Activated naive CD4-positive, alpha-beta T cell treated with anti-CD3 and anti-CD28 coated beads for 36 hours (primary cell): ENCODE measurements at regions of chr20 and their contacts with region 1.

Region 1: DNA sequence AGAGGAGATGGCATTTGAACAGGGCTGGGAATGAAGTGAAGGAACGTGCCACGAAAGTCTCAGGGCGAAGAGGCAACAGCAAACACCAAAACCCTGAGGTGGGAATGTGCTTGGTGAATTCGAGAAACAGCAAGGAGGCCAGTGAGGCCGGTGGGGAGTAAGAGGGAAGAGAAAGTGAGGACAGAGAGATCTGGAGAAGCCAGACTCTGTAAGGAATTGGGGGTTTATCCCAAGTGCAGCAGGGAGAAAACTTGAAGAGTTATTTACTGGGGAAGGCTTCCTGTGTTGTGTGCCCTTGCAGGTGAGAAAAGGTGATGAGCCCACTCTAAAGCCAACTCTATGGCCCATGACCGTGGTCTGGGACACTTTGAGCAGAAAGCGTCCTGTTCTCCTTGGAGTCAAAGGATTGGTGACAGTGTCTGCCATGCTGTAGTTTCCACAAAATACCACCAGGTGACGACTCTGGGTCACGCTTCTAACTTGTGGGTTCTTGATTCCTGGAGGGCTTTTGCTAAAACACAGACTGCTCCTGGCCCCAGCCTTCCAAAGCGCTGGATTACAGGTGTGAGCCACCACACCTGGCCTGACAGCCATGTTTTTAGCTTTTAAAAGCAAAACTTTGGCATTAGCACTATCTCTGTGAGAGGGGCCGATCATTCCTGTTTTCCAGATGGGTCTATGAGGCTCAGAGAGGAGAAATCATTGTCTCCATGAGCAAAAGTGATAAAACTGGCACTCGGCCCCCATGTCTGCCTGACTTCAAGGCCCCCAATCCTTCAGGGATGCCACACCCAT is 18.0 kb upstream of the CSNK2A1 start:
- DNase-seq: peak; percentile 77
- H3K4me3 Mint-ChIP-seq: no peak overlapping the region
- H3K27ac Mint-ChIP-seq: no peak overlapping the region
- H3K4me1 Mint-ChIP-seq: no peaks in the 10 kb centered on the region
- H3K27me3 Mint-ChIP-seq: peaks cover 11% of the 10 kb centered on the region

Region 2: DNA sequence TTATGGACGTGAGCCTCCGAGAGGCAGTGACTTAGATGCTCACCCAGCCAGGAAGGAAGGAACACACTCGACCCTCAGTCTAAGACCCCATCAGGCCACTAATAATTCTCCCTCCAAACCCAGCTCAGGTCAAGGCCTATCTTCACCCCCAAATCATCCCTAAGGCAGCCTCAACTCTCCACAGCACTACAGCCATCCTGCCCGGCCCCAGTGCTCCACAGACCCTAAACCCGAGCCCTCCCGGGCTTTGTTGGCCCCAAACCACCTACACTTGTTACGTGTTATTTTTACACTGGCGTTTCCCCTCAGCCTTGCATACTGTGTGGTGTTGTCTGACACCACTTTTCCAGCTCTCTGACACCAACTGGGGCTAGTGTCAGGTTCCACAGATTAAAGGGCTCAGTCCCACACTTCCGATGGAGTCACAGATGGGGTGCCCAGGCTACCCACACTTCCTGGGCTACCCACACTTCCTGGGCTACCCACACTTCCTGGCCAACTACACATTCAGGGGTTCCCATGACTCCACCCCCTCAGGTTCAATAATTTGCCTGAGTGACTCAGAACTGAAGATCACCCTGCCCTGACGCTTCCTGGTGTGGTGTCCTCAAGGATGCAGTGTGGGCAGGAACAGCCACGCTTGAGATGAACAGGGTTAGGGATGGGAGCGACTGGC is 128.2 kb before region 1 on chr20:
- CTCF ChIA-PET with region 1: no interaction called
- intact Hi-C with region 1: no loop called
- DNase-seq: peak; percentile 80
- H3K4me3 Mint-ChIP-seq: peak overlapping the region; percentile 55
- H3K27ac Mint-ChIP-seq: peak overlapping the region; percentile 97
- H3K4me1 Mint-ChIP-seq: peaks cover 59% of the 10 kb centered on the region
- H3K27me3 Mint-ChIP-seq: no peaks in the 10 kb centered on the region

Region 3: DNA sequence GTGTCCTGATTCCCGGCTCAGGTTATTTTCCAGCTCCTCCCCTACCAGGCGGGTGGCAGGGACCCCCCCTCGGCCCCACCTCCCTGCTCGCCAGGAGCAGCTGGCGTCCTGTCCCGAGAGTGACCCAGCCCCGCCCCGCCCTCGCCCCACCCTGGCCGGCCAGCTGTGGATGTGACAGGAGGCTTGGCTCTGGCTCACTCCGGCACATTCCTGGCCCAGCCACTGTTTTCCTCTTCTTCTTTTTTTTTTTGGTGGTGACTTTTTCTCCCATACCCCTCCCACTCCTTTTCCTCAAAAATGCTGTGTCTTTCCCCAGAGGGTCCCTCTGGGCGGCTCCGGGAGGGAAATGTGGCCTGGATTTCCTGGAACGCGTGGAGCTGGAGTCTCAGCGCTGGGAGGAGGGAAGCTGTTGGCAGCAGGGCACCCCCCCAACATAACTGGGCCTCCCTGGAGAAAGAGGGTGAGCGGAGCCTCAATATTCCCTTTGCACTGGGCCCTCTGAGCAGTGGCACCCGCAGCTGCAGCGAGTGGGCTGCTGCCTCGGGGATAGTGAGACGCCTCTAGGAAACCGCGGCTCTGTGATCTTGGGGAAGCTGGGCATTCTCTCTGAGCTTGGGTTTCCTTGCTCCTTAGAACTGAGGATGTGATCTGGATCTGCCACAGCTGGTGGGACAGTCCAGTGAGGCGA is 10.3 kb after region 1 on chr20:
- CTCF ChIA-PET with region 1: interaction called, 13 read pairs
- intact Hi-C with region 1: no loop called
- DNase-seq: no peak
- H3K4me3 Mint-ChIP-seq: no peak overlapping the region
- H3K27ac Mint-ChIP-seq: no peak overlapping the region
- H3K4me1 Mint-ChIP-seq: peaks cover 3% of the 10 kb centered on the region
- H3K27me3 Mint-ChIP-seq: peaks cover 38% of the 10 kb centered on the region

Region 4: DNA sequence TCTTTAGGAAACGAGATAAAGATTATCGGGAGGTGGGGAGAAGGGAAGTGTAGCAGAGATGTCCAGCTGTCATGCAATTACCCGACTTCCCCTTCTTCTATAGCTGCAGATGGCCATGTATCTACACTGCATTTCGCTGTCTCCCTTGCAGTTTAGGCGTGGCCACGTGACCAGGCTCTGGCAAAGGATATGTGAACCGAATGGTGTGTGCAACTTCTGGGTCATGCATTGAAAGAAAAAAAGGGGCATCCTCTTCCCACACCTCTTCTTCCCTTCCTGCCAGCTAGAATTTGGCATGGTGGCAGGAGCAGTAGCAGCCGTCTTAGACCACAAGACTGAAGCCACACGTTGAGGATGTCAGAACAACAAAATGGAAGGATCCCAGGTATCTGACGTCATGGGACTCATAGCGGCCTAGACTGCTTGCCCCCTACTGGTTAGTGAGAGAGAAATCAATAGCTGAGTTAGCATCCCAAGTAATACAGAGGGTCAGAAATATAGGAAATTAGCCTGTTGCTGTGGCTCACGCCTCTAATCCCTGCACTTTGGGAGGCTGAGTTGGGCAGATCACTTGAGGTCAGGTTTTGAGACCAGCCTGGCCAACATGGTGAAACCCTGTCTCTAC is 15.6 kb after region 1 on chr20:
- CTCF ChIA-PET with region 1: interaction called, 13 read pairs
- intact Hi-C with region 1: no loop called
- DNase-seq: no peak
- H3K4me3 Mint-ChIP-seq: no peak overlapping the region
- H3K27ac Mint-ChIP-seq: no peak overlapping the region
- H3K4me1 Mint-ChIP-seq: no peaks in the 10 kb centered on the region
- H3K27me3 Mint-ChIP-seq: peaks cover 20% of the 10 kb centered on the region

Region 5: DNA sequence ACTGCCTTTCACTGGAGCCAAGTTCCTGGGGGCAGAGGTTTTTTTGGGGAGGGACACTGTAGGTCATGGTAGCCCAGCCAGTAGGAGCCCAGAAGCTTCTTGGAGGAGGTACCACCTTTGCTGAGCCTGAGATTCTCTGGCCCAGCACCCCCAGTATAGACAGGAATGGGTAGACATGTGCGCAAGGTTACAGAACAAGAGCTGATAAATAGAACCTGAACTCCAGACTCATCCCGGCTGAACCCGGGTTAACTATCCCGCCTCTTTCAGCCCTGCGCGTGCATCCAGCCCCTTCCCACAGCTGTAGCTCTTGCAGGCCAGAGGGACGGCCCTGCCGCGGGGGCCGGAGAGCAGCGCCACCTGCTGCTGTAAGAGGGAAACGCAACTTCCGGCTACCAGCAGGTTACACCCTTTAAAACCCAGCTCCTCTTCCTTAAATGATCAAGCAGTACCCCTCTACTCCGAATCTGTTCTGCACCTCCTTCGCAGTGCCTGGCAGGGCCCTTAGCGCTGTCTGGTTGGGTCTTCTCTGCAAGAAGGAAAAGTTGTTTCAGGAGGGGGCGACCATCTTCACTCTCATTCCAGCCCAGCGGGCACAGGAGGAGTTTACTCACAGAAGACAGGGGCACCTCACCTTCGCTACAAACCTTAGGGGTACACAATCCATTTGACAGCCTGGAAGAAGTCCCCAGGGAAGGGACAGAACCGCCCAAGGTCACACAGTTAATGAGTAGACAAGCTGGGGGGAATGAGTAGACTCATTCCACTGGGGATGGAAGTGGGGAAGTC is 83.9 kb after region 1 on chr20:
- CTCF ChIA-PET with region 1: interaction called, 16 read pairs
- intact Hi-C with region 1: loop called (anchors 1 kb)
- DNase-seq: peak; percentile 76
- H3K4me3 Mint-ChIP-seq: no peak overlapping the region
- H3K27ac Mint-ChIP-seq: no peak overlapping the region
- H3K4me1 Mint-ChIP-seq: peaks cover 9% of the 10 kb centered on the region
- H3K27me3 Mint-ChIP-seq: peaks cover 21% of the 10 kb centered on the region

Region 6: DNA sequence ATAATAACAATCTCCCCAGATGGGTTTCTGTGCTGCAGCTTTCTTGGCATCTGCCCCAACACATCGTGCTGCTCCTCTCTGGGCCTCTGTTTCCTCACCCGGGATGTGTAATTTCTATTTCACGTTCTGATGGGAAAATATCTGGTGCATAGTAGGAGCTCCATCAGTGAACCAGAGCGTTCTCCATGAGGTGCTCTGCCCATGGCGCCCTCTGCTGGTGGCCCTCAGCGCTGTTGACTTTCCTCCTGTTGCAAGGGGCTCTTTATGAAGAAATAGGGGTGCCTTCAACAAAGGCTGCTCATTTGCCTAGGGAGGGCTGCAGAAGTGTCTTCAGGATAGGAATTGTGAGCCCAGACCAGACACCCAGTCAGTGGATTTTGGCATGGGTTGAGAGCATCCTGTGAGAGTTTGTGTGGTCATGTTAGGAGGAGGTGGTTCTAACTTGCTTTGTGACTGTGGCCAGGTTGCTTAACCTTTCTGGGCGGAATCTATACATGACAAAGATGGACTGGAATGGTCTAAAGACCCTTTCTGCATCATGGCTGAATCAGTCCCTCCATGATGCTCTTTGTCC is 105.8 kb after region 1 on chr20:
- CTCF ChIA-PET with region 1: interaction called, 3 read pairs
- intact Hi-C with region 1: loop called (anchors 1 kb)
- DNase-seq: peak; percentile 76
- H3K4me3 Mint-ChIP-seq: no peak overlapping the region
- H3K27ac Mint-ChIP-seq: no peak overlapping the region
- H3K4me1 Mint-ChIP-seq: peaks cover 4% of the 10 kb centered on the region
- H3K27me3 Mint-ChIP-seq: peaks cover 61% of the 10 kb centered on the region

Region 7: GRCh38 chr20:728248-728944 is 166.8 kb after region 1 on chr20:
- CTCF ChIA-PET with region 1: interaction called, 4 read pairs
- intact Hi-C with region 1: loop called (anchors 1 kb)
- DNase-seq: peak; percentile 69
- H3K4me3 Mint-ChIP-seq: no peak overlapping the region
- H3K27ac Mint-ChIP-seq: no peak overlapping the region
- H3K4me1 Mint-ChIP-seq: no peaks in the 10 kb centered on the region
- H3K27me3 Mint-ChIP-seq: peaks cover 40% of the 10 kb centered on the region

Region 8: GRCh38 chr20:740141-740540 is 178.5 kb after region 1 on chr20:
- CTCF ChIA-PET with region 1: interaction called, 22 read pairs
- intact Hi-C with region 1: loop called (anchors 1 kb)
- DNase-seq: no peak
- H3K4me3 Mint-ChIP-seq: no peak overlapping the region
- H3K27ac Mint-ChIP-seq: no peak overlapping the region
- H3K4me1 Mint-ChIP-seq: no peaks in the 10 kb centered on the region
- H3K27me3 Mint-ChIP-seq: peaks cover 15% of the 10 kb centered on the region